ENCODE measurements at regions of chr2 and their contacts with region 1.

Region 1: GRCh38 chr2:232854082-232854481 is 16.0 kb upstream of the SNORC start:
- DNase-seq: peak; percentile 89 to 92
- H3K4me3 ChIP-seq: no peak overlapping the region
- H3K27ac ChIP-seq: peak overlapping the region; percentile 97
- H3K4me1 ChIP-seq: peaks cover 53% of the 10 kb centered on the region
- H3K27me3 ChIP-seq: no peaks in the 10 kb centered on the region
- CTCF ChIP-seq: no peak

Region 2: DNA sequence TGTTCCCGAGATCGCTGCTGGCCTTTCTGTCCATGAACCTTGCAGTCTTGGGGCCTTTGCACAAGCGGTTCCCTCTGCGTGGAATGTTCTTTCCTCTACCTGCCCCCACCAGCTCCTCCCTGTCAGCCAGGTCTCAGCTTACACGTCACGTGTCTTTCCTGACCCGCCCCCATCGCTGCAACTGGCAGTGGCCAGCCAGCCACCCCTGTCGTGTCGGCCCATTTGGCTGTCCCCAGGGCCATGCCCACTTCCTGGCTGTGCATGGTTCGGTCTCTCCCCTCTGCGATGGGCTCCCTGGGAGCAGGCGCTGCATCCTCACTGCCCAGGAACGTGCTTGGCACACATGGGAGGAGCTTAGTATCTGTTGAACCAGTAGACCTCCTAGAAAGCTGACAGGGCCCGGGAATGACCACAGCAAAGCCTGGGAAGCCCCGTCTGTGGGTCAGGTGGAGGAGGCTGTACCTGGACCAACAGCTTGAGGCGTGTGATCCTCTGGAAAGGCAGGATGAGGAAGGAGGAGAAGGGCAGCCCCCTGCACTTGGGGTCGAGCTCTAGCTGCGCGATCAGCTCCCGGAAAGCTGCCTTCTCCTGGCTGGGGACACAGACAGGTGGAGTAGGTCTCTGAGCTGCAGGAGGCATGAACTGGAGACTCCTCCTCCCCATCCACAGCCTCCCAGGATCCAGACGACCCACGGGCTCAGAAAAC is 37.0 kb after region 1 on chr2:
- CTCF ChIA-PET with region 1: no interaction called
- POLR2A ChIA-PET with region 1: interaction called, 5 read pairs
- intact Hi-C with region 1: loop called (anchors 1 kb)
- DNase-seq: peak; percentile 62 to 99
- H3K4me3 ChIP-seq: no peak overlapping the region
- H3K27ac ChIP-seq: no peak overlapping the region
- H3K4me1 ChIP-seq: peaks cover 3% of the 10 kb centered on the region
- H3K27me3 ChIP-seq: no peaks in the 10 kb centered on the region
- CTCF ChIP-seq: no peak

Region 3: DNA sequence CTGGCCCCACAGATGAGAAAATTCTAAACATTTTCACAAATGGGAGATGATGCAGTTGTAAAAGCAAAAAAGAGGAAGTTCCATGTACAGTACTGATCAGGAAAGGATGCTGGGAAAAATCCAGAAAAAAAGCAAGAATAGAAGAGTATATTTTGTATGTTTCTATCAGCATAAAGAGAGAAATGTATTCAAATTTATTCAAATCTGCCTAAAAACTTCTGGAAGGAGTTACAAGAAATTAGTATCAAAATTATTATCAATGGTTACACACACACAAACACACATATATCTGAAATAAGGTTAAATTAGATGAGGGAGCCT is 134.6 kb after region 1 on chr2:
- CTCF ChIA-PET with region 1: interaction called, 8 read pairs
- POLR2A ChIA-PET with region 1: no interaction called
- intact Hi-C with region 1: loop called (anchors 1 kb)
- DNase-seq: no peak
- H3K4me3 ChIP-seq: 0 out of 2 replicates have a peak overlapping the region, but pooled peaks have one; percentile 19
- H3K27ac ChIP-seq: peak overlapping the region; percentile 95
- H3K4me1 ChIP-seq: peaks cover 50% of the 10 kb centered on the region
- H3K27me3 ChIP-seq: no peaks in the 10 kb centered on the region
- CTCF ChIP-seq: no peak

Region 4: GRCh38 chr2:233053928-233054784 is 200.1 kb after region 1 on chr2:
- CTCF ChIA-PET with region 1: interaction called, 7 read pairs
- POLR2A ChIA-PET with region 1: interaction called, 4 read pairs
- intact Hi-C with region 1: loop called (anchors 1 kb)
- DNase-seq: peak in 1 of 2 experiments; percentile 64
- H3K4me3 ChIP-seq: no peak overlapping the region
- H3K27ac ChIP-seq: no peak overlapping the region
- H3K4me1 ChIP-seq: peaks cover 32% of the 10 kb centered on the region
- H3K27me3 ChIP-seq: no peaks in the 10 kb centered on the region
- CTCF ChIP-seq: peak; percentile 97

Region 5: DNA sequence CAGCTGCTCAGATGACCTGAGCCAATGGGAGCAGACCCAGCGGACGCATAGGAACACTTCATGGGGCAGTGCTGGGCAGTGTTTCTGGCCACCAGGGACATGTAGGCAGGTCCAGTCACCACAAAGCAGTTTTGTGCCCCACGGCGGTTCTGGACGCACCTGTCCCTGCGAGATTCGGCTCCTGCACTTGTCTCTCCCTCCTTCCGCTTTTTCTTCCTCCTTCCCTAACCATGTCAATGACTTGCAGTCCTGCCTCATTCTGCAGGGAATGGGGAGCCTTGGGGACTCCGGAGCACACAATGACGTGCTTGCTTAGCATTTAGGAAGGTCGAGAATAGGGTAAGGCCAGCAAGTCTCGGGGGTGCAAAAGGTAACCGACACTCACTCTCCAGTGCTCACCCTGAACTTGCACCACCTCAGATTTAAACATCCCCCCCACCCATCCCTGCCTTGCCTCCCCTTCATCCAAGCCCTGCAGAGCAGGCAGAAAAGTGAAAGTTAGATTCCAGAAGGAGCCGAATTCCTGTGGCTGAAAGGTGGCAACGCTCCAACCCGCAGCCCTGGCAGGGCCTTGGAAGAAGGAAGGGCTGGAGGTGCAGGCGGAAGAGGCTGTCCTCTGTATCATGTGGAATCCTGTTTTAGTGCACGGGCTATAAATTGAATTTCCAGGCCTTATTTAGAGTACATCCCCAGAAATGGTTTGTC is 356.9 kb after region 1 on chr2:
- CTCF ChIA-PET with region 1: no interaction called
- POLR2A ChIA-PET with region 1: no interaction called
- intact Hi-C with region 1: loop called (anchors 1 kb)
- DNase-seq: peak; percentile 92 to 97
- H3K4me3 ChIP-seq: no peak overlapping the region
- H3K27ac ChIP-seq: peak overlapping the region; percentile 28; the same call in 1 of the 2 replicates
- H3K4me1 ChIP-seq: peaks cover 57% of the 10 kb centered on the region
- H3K27me3 ChIP-seq: no peaks in the 10 kb centered on the region
- CTCF ChIP-seq: no peak

Region 6: DNA sequence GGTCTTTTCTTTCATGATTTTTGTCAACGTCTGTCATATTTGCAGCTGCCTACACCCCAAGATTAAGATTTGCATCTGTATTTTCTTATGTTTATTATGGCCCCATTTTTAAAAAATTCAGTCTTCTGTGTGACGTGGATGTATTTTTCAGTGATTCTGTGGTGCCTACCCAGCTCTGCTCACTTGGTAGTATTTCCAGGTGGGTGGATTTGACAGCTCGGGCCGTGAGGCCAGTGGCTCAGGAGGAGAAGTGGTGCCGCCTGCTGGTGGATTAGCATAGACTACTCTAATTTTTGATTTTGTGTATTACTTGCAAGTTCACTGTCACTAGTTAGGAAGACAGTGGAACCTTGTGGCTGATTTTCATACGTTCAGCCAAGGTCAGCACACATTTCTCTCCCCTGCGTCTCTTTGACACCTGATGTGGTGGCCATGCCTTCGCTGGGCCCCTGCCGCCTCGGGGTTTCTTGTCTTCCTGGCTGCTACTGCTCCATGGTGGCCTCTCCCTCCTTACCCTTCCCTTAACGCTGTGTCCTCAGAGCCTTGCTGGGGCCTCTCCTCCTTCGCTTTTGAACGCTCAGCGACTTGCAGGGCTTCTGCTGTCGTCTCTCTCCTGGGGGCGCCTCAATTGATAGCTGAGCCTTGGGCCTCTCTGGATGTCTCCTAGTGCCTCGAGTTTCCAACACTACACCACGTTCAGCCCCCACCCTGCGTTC is 589.5 kb after region 1 on chr2:
- CTCF ChIA-PET with region 1: no interaction called
- POLR2A ChIA-PET with region 1: interaction called, 4 read pairs
- intact Hi-C with region 1: loop called (anchors 5 kb)
- DNase-seq: peak; percentile 70 to 85
- H3K4me3 ChIP-seq: no peak overlapping the region
- H3K27ac ChIP-seq: no peak overlapping the region
- H3K4me1 ChIP-seq: no peaks in the 10 kb centered on the region
- H3K27me3 ChIP-seq: no peaks in the 10 kb centered on the region
- CTCF ChIP-seq: peak; percentile 97

Region 7: GRCh38 chr2:233832869-233833311 is 978.8 kb after region 1 on chr2:
- CTCF ChIA-PET with region 1: no interaction called
- POLR2A ChIA-PET with region 1: no interaction called
- intact Hi-C with region 1: loop called (anchors 5 kb)
- DNase-seq: peak; percentile 77 to 83
- H3K4me3 ChIP-seq: no peak overlapping the region
- H3K27ac ChIP-seq: no peak overlapping the region
- H3K4me1 ChIP-seq: no peaks in the 10 kb centered on the region
- H3K27me3 ChIP-seq: no peaks in the 10 kb centered on the region
- CTCF ChIP-seq: peak; percentile 74